ENCODE measurements at regions of chr5 and their contacts with region 1.

Region 1: GRCh38 chr5:73902327-73903051 is 276.5 kb downstream of the ARHGEF28 start:
- DNase-seq: peak; percentile 57
- CTCF ChIP-seq: peak; percentile 70

Region 2: GRCh38 chr5:73625944-73626811 is 276.3 kb before region 1 on chr5 and contains the start of gene ARHGEF28:
- in situ Hi-C with region 1: no loop called
- DNase-seq: peak; percentile 61
- CTCF ChIP-seq: no peak

Region 3: GRCh38 chr5:74648835-74649293 is 746.4 kb after region 1 on chr5:
- in situ Hi-C with region 1: loop called (anchors 5 kb)
- DNase-seq: peak; percentile 70
- CTCF ChIP-seq: peak; percentile 54